ENCODE measurements at regions of chr18 and their contacts with region 1.

Region 1: GRCh38 chr18:68837665-68838455 is 40.0 kb downstream of the CCDC102B start:
- DNase-seq: no peak
- H3K4me3 ChIP-seq: no peak overlapping the region
- H3K27ac ChIP-seq: peak overlapping the region in 1 of 2 donors; percentile 69
- H3K4me1 ChIP-seq: no peaks in the 10 kb centered on the region
- H3K27me3 ChIP-seq: no peaks in the 10 kb centered on the region
- CTCF ChIP-seq: no peak
- POLR2A ChIP-seq: no peak

Region 2: GRCh38 chr18:69364930-69365329 is 527.1 kb after region 1 on chr18:
- intact Hi-C with region 1: loop called (anchors 5 kb)
- DNase-seq: no peak
- H3K4me3 ChIP-seq: no peak overlapping the region
- H3K27ac ChIP-seq: no peak overlapping the region
- H3K4me1 ChIP-seq: no peaks in the 10 kb centered on the region
- H3K27me3 ChIP-seq: no peaks in the 10 kb centered on the region
- CTCF ChIP-seq: no peak
- POLR2A ChIP-seq: no peak

Measured in breast epithelium (tissue), 4 donors.